K562 (cell line): ENCODE measurements at regions of chr6 and their contacts with region 1.

Region 1: GRCh38 chr6:7615611-7616383 is 25.8 kb downstream of the SNRNP48 start:
- DNase-seq: peak; percentile 52 to 77 (median 60)
- ATAC-seq: peak; percentile 80
- H3K4me3 ChIP-seq: no peak overlapping the region
- H3K27ac ChIP-seq: no peak overlapping the region
- H3K4me1 ChIP-seq: no peaks in the 10 kb centered on the region
- H3K27me3 ChIP-seq: peaks cover 29 to 34% of the 10 kb centered on the region in 2 experiments
- CTCF ChIP-seq: peak; percentile 73 to 95 (median 82)
- EP300 ChIP-seq: no peak
- POLR2A ChIP-seq: no peak
- RAD21 ChIP-seq: peak; percentile 92 to 94

Region 2: GRCh38 chr6:6724539-6725467 is 891.0 kb before region 1 on chr6:
- CTCF ChIA-PET with region 1: interaction called, 3 read pairs
- POLR2A ChIA-PET with region 1: no interaction called
- in situ Hi-C with region 1: loop called (anchors 10 kb)
- intact Hi-C with region 1: no loop called
- DNase-seq: peak; percentile 60 to 82 (median 71)
- ATAC-seq: peak; percentile 90
- H3K4me3 ChIP-seq: no peak overlapping the region
- H3K27ac ChIP-seq: peak overlapping the region; percentile 24; the same call in 1 of the 3 replicates
- H3K4me1 ChIP-seq: peaks cover 10 to 23% of the 10 kb centered on the region in 2 experiments; a peak in 4 of 5 replicates
- H3K27me3 ChIP-seq: no peaks in the 10 kb centered on the region
- CTCF ChIP-seq: peak; percentile 80 to 92 (median 88)
- EP300 ChIP-seq: no peak
- POLR2A ChIP-seq: no peak
- RAD21 ChIP-seq: peak; percentile 80 to 87

Region 3: DNA sequence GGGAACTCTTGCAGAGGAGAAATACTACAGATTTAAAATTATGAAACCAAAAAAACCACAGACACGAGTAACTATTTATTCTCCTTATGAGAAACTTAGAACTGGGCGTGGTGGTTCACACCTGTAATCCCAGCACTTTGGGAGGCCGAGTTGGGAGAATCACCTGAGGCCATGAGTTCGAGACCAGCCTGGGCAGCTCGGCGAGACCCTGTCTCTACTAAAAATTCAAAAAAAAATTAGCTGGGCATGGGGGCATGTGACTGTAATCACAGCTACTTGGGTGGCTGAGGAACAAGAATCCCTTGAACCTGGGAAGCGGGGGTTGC is 339.6 kb before region 1 on chr6:
- CTCF ChIA-PET with region 1: interaction called, 44 read pairs
- POLR2A ChIA-PET with region 1: interaction called, 3 read pairs
- in situ Hi-C with region 1: loop called (anchors 5 kb)
- intact Hi-C with region 1: loop called (anchors 1 kb)
- DNase-seq: no peak
- ATAC-seq: no peak
- H3K4me3 ChIP-seq: no peak overlapping the region
- H3K27ac ChIP-seq: no peak overlapping the region
- H3K4me1 ChIP-seq: peaks cover 0 to 7% of the 10 kb centered on the region in 2 experiments; a peak in 1 of 5 replicates
- H3K27me3 ChIP-seq: peaks cover 8 to 13% of the 10 kb centered on the region in 2 experiments; a peak in 4 of 5 replicates
- CTCF ChIP-seq: no peak
- EP300 ChIP-seq: no peak
- POLR2A ChIP-seq: no peak
- RAD21 ChIP-seq: no peak

Region 4: DNA sequence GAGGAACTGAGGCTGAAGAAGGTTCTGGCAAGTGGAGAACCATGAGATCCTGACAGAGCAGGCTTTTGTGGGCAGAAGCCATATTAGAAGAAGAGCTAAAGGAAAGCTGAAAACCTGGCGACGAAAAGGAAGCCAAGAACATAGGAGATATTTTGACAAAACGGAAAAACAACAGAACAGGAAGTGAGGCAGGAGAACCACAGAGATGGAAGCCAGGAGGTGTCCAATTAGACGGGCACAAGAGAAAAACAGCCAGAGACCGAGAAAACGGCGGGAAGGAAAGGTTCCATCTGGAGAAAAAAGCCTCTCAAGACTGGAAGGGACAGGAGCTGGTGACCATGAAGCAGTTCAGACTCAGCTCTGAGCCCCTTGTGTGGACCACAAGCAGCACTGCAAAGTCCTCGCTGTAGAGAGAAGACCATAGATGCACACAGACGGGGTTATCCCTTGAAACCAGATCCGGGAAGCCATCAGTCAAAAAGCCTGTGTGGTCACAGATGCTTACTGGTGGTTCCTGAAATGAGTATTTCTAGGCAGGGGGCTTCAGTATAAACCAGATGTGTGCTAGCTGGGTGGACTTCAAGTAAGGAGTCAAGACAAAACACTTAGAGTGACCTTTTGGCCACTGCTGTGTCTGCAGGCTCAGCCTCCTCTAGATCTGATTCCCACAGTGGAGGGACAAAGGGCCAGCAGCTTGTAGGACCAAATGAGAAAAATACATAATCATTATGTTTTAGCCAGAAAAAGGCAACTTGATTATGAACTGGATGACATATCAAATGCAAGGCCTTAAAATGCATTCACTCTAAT is 333.5 kb before region 1 on chr6:
- CTCF ChIA-PET with region 1: interaction called, 44 read pairs
- POLR2A ChIA-PET with region 1: no interaction called
- in situ Hi-C with region 1: loop called (anchors 5 kb)
- intact Hi-C with region 1: no loop called
- DNase-seq: no peak
- ATAC-seq: peak; percentile 30; the same call in 1 of the 3 replicates
- H3K4me3 ChIP-seq: no peak overlapping the region
- H3K27ac ChIP-seq: no peak overlapping the region
- H3K4me1 ChIP-seq: no peaks in the 10 kb centered on the region
- H3K27me3 ChIP-seq: no peaks in the 10 kb centered on the region
- CTCF ChIP-seq: no peak
- EP300 ChIP-seq: no peak
- POLR2A ChIP-seq: peak; percentile 39; the same call in 1 of the 2 replicates
- RAD21 ChIP-seq: no peak

Region 5: DNA sequence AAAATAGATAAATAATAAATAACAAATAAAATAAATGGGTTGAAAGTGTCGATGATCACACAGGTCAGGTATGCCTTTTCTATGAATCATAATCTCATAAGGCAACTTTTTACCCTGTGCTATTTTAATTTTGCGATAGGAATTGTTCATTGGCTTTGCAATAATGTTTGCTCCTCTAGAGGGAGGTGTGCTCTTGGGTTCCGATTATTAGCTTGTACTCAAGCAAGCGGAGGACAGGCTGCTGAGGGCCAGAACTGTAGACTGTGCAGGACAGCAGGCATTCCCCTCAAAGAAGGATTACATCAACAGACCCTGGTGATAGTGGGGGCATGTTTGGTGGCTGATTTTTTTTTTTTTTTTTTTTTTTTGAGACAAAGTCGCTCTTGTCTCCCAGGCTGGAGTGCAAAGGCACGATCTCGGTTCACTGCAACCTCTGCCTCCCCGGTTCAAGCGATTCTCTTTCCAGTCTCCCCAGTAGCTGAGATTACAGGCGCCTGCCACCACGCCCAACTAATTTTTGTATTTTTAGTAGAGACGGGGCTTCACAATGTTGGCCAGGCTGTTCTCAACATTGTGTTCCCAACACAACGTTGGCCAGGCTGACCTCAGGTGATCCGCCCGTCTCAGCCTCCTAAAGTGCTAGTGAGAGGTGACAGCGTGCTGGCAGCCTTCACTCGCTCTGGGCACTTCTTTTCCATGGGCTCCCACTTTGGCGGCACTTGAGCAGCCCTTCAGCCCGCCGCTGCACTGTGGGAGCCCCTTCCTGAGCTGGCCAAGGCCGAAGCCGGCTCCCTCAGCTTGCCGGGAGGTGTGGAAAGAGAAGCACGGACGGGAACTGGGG is 190.6 kb before region 1 on chr6:
- CTCF ChIA-PET with region 1: interaction called, 4 read pairs
- POLR2A ChIA-PET with region 1: no interaction called
- in situ Hi-C with region 1: no loop called
- intact Hi-C with region 1: loop called (anchors 1 kb)
- DNase-seq: peak in 2 of 4 experiments; percentile 35 to 39
- ATAC-seq: peak; percentile 88
- H3K4me3 ChIP-seq: no peak overlapping the region
- H3K27ac ChIP-seq: no peak overlapping the region
- H3K4me1 ChIP-seq: no peaks in the 10 kb centered on the region
- H3K27me3 ChIP-seq: peaks cover 0 to 4% of the 10 kb centered on the region in 2 experiments; a peak in 1 of 5 replicates
- CTCF ChIP-seq: peak; percentile 45 to 61 (median 46); a peak in 5 of 6 replicates
- EP300 ChIP-seq: no peak
- POLR2A ChIP-seq: no peak
- RAD21 ChIP-seq: peak in 1 of 2 experiments; percentile 57; a peak in 3 of 4 replicates